ENCODE measurements at regions of chr15 and their contacts with region 1.

Region 1: GRCh38 chr15:80776420-80777045 is 2.6 kb upstream of the CEMIP start:
- DNase-seq: peak; percentile 45 to 73
- ATAC-seq: peak; percentile 56 to 78 (median 68)
- H3K4me3 ChIP-seq: no peak overlapping the region
- H3K27ac ChIP-seq: peak overlapping the region; percentile 59
- H3K4me1 ChIP-seq: peaks cover 12% of the 10 kb centered on the region
- H3K27me3 ChIP-seq: peaks cover 0 to 30% (median 17%) of the 10 kb centered on the region in 3 donors
- CTCF ChIP-seq: peak; percentile 81

Region 2: DNA sequence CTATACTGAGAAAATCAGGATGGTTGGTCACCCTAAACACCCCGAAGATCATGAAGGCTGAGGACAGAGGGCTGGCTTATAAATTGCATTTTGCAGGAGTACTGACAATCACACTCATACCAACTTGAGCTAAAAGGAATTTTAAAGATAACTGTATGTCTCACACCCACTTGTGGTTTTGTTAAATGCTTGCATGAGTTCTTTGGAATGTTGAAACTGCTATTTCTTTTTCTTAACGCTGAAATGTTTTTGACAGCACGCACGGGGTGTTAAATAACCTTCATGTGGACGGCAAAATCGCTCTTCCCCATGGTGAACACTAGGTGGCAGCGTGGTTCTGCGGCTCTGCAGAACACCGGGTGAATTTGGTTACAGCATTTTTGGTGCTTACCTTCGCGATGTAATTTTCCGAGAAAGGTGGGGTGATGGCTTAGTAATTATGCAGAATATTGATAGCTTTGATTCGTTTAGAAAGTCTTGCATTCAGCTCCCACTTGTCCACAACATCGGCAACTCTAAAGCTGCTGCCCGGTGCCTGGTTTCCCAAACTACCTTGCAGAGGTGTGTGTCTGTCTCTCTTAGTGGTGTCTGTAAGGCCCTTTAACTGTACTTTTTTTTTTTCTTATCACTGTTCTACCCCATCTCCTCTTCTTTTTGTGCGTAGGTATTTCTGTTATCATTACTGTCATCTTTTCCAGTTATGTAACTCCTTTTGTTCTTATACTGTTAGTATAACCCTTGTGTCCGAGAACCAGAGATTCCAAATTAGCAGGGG is 320.7 kb before region 1 on chr15:
- intact Hi-C with region 1: loop called (anchors 1 to 2 kb)
- DNase-seq: no peak
- ATAC-seq: peak; percentile 77 to 92 (median 80)
- H3K4me3 ChIP-seq: no peak overlapping the region
- H3K27ac ChIP-seq: no peak overlapping the region
- H3K4me1 ChIP-seq: no peaks in the 10 kb centered on the region
- H3K27me3 ChIP-seq: no peaks in the 10 kb centered on the region
- CTCF ChIP-seq: peak; percentile 94

Region 3: GRCh38 chr15:80567721-80568157 is 208.8 kb before region 1 on chr15:
- intact Hi-C with region 1: loop called (anchors 2 to 5 kb)
- DNase-seq: no peak
- ATAC-seq: peak; percentile 55 to 74 (median 70)
- H3K4me3 ChIP-seq: no peak overlapping the region
- H3K27ac ChIP-seq: no peak overlapping the region
- H3K4me1 ChIP-seq: no peaks in the 10 kb centered on the region
- H3K27me3 ChIP-seq: peaks cover 0 to 3% (median 0%) of the 10 kb centered on the region in 3 donors
- CTCF ChIP-seq: peak; percentile 57

Region 4: DNA sequence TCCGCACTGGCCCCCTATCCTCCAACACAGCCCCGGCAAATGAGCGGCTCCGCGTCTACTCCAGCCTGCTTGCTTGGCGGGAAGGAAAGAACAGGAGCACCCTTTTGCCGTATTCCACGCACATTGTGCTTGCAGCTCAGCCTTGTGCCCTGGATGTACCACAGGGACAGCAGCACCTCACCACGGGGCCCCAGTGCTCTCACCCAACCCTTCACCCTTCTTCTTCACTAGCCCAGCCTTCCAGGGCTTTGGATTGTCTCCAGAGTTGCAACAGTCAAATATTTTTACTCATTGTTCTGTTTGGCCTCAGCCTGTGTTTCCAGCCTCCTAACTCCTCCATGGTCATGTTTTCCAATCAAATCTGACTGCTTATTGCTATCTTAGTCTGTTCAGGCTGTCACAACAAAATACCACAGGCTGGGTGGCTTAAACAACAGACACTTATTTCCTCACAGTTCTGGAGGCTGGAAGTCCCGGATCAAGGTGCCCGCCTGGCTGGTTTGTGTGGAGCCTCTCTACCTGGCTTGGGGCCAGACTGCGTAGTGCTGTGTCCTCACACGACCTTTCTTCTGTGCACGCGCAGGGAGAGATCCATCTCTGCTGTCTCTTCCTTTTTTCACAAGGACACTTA is 160.7 kb before region 1 on chr15:
- intact Hi-C with region 1: loop called (anchors 5 kb)
- DNase-seq: peak; percentile 57 to 68
- ATAC-seq: peak; percentile 30 to 66 (median 43)
- H3K4me3 ChIP-seq: no peak overlapping the region
- H3K27ac ChIP-seq: no peak overlapping the region
- H3K4me1 ChIP-seq: peaks cover 4% of the 10 kb centered on the region
- H3K27me3 ChIP-seq: no peaks in the 10 kb centered on the region
- CTCF ChIP-seq: no peak

Region 5: DNA sequence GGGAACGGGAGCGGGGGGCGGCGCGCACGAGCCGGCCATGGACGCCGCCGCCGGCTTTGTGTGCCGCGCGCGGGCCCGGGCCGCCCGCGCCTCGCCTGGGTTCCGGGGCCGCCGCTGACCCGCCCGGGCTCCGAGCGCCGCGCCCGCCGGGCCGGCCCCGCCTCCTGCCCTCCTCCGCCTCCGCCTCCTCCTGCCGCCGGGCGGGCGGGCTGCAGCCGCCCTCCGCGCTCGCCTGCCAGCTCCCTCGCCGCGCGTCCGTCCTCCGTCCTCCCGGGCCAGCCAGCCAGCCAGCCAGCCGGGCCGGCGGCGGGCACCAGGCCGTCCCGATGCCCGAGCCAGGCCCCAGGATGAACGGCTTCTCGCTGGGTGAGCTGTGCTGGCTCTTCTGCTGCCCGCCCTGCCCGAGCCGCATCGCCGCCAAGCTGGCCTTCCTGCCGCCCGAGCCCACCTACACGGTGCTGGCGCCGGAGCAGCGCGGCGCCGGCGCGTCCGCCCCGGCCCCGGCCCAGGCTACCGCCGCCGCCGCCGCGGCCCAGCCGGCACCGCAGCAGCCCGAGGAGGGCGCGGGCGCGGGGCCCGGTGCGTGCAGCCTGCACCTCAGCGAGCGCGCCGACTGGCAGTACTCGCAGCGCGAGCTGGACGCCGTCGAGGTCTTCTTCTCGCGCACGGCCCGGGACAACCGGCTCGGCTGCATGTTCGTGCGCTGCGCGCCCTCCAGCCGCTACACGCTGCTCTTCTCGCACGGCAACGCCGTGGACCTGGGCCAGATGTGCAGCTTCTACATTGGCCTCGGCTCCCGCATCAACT is 81.2 kb before region 1 on chr15 and contains the start of gene ABHD17C:
- intact Hi-C with region 1: loop called in 1 of 2 experiments (anchors 5 kb)
- DNase-seq: peak; percentile 65 to 76
- ATAC-seq: peak; percentile 70 to 80 (median 78)
- H3K4me3 ChIP-seq: peak within 1 kb of the TSS; percentile 78
- H3K27ac ChIP-seq: peak within 1 kb of the TSS; percentile 83
- H3K4me1 ChIP-seq: peaks cover 11% of the 10 kb centered on the region
- H3K27me3 ChIP-seq: no peaks in the 10 kb centered on the region
- CTCF ChIP-seq: no peak
- total RNA-seq, gene ABHD17C: 1.1 to 2.9 (median 2.1) TPM

Region 6: DNA sequence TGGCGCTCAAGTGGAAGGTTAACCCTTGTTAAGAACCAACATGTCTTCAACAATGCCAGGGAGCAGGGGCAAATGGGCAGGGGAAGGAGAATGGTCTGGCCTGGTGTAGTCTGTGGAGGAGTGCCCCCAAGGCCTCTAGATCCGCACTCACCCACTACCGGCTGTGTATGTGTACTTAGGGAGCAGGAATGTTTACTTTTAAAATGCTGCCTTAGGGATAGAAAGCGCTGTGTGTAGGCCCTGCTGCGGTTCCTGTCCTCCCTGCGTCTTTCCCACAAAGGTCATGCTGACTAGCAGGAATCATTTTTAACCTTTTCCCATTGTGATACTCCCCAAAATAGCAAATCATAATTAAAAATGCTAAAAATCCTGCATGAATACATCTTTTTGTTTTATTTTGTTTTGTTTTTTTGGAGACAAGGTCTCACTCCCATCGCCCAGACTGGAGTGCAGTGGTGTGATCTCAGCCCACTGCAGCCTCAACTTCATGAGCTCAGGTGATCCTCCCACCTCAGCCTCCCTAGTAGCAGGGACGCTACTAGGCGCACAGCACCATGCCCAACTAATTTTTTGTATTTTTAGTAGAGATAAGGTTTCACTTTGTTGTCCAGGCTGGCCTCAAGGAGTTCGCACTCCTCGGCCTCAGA is 33.2 kb before region 1 on chr15:
- intact Hi-C with region 1: no loop called
- DNase-seq: no peak
- ATAC-seq: no peak
- H3K4me3 ChIP-seq: no peak overlapping the region
- H3K27ac ChIP-seq: no peak overlapping the region
- H3K4me1 ChIP-seq: no peaks in the 10 kb centered on the region
- H3K27me3 ChIP-seq: no peaks in the 10 kb centered on the region
- CTCF ChIP-seq: no peak

Region 7: DNA sequence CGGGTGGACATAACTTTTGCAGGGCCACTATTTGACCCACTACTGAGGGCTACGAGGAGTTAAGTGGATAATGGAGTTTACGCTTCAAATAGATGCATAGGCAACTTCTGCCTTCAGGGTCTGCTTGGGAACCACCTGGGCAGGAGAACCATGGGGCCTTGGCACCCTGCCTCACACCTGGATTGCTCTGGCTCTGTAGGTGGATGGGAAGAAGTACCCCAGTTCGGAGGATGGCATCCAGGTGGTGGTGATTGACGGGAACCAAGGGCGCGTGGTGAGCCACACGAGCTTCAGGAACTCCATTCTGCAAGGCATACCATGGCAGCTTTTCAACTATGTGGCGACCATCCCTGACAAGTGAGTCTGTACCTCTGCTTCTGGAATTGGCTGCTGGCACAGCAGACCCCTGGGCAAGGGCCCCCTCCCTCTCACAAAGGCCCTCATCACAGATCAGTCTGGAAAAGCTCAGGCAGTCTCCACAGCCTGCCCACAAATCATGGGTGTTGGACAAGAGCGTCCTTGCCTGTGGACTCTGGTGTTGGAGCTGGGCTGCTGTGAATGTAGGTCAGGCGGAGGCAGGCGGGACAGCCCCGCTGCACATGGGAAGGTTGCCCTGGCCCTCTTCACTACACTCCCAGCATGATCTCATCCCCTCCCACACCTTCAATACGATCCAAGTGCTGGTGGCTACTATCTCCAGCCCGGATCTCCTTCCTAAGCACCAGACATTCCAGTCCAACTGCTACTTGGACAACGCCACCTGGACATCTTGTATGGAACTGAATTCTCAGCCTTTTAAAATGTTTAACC is 166.4 kb after region 1 on chr15:
- intact Hi-C with region 1: loop called in 1 of 2 experiments (anchors 10 kb)
- DNase-seq: peak; percentile 47 to 66
- ATAC-seq: peak; percentile 88 to 96 (median 94)
- H3K4me3 ChIP-seq: no peak overlapping the region
- H3K27ac ChIP-seq: no peak overlapping the region
- H3K4me1 ChIP-seq: no peaks in the 10 kb centered on the region
- H3K27me3 ChIP-seq: no peaks in the 10 kb centered on the region
- CTCF ChIP-seq: no peak

Region 8: DNA sequence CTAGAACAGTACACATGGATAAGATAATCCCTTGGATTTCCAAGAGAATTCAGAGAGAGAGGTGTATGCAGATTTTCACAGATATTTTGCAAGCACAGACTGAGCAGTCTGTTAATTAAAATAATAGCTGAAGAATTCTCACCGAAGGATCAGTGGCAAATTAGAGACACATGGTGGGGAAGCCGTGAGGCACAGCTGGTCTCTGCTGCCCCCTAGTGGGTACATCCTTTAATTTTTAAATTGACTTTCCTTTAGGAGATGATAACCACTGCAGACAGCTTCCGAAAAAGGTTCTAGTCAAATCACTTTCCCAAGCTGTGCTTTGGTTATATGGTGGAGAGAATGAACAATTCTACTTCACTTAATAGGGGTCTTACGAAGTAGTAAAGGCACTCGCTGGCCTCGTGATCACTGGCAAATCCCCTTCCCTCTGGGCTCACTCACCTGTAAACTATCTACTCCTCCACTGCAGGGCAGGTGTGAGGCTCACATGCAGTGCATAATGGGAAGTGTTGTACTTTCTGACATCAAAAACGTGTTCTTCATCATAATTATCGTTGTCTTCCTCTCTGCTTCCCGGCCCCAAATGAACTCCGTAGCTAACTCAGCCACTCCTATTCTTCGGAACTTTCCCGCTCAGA is 193.6 kb after region 1 on chr15:
- intact Hi-C with region 1: loop called in 1 of 2 experiments (anchors 2 kb)
- DNase-seq: peak in 1 of 2 donors; percentile 42
- ATAC-seq: peak; percentile 68 to 85 (median 72)
- H3K4me3 ChIP-seq: no peak overlapping the region
- H3K27ac ChIP-seq: no peak overlapping the region
- H3K4me1 ChIP-seq: peaks cover 3% of the 10 kb centered on the region
- H3K27me3 ChIP-seq: no peaks in the 10 kb centered on the region
- CTCF ChIP-seq: peak; percentile 91